Activated T-helper 1 cell treated with anti-CD3 and anti-CD28 coated beads, Interleukin-12 subunit alpha, Interleukin-12 subunit beta, Interleukin-2, Interleukin-4 antibody, amounts not matched to agents 30 ng/mL and 10 ng/mL and 1 ng/mL, durations not matched to agents 14 hours and 24 hours and 36 hours (primary cell): ENCODE measurements at regions of chr3 and their contacts with region 1.

Region 1: GRCh38 chr3:46923559-46924350 is 46.2 kb downstream of the PTH1R start:
- DNase-seq: no peak
- H3K4me3 Mint-ChIP-seq: no peak overlapping the region
- H3K27ac Mint-ChIP-seq: peak overlapping the region; percentile 63
- H3K4me1 Mint-ChIP-seq: peaks cover 34% of the 10 kb centered on the region
- H3K27me3 Mint-ChIP-seq: no peaks in the 10 kb centered on the region

Region 2: DNA sequence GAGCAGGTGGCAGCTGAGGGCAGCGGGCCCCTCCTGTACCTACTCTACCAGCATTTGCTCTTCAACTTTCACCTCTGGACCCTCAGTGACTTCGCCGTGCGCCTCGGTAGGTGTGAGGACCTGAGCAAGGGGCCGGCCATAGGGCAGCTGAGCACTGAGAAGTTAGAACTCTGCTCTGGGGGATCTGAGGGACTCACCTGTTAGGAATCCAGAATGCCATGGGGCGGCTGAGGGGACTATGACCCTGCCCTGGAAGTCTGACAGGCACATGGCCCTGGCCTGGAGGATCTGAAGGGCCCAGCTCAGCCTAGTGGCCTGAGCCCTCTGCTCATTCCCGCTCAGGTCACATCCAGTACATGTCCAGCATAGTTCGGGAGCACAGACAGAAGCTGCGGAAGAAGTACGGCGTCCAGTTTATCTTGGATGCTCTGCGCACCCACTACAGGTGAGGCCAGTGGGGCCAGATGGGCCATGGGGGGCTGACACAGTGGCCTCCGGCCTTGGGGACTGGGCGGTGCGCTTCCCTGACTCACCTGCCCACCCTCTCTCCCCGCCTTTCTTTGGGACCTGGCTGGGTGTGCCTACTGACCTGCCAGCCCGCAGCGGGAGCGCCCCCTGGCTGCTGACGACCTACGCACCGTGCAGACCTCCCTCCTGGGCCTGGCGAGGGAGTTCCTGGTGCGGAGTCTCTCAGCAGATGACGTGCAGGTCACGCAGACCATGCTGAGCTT is 74.5 kb after region 1 on chr3:
- intact Hi-C with region 1: loop called (anchors 1 kb)
- DNase-seq: peak; percentile 47
- H3K4me3 Mint-ChIP-seq: no peak overlapping the region
- H3K27ac Mint-ChIP-seq: no peak overlapping the region
- H3K4me1 Mint-ChIP-seq: peaks cover 7% of the 10 kb centered on the region
- H3K27me3 Mint-ChIP-seq: no peaks in the 10 kb centered on the region

Region 3: DNA sequence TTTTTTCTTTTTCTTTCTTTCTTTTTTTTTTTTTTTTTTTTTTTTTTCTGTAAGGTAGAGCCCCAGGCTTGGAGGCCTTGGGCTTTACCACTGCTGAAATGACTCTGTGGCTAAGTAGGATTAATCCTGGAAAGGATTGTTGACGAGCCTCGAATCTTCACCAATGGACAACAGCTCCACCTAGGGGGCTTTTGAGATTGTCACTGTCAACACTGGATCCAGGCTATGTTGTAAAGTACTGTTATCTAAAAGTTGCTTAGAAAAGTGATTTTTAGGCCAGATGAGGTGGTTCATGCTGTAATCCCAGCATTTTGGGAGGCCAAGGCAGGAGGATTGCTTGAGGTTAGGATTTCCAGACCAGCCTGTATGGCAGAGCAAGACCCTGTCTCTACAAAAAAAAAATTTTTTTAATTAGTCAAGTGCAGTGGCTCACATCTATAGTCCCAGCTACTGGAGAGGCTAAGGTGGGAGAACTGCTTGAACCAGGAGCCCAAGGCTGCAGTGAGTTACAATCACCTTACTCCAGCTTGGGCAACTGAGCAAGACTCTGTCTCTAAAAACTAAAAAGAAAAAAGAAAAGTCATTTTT is 400.6 kb after region 1 on chr3:
- intact Hi-C with region 1: loop called (anchors 10 kb)
- DNase-seq: peak; percentile 23
- H3K4me3 Mint-ChIP-seq: no peak overlapping the region
- H3K27ac Mint-ChIP-seq: no peak overlapping the region
- H3K4me1 Mint-ChIP-seq: no peaks in the 10 kb centered on the region
- H3K27me3 Mint-ChIP-seq: no peaks in the 10 kb centered on the region